ENCODE measurements at regions of chr12 and their contacts with region 1.

Region 1: GRCh38 chr12:93677195-93678064 is at the start of gene CRADD:
- DNase-seq: peak; percentile 59
- H3K4me3 ChIP-seq: peak within 1 kb of the TSS; percentile 45 to 82 (median 80)
- H3K27ac ChIP-seq: peak within 1 kb of the TSS; percentile 89 to 99 (median 98)
- H3K4me1 ChIP-seq: peaks cover 10 to 38% (median 17%) of the 10 kb centered on the region in 3 donors
- H3K27me3 ChIP-seq: peaks cover 0 to 8% (median 0%) of the 10 kb centered on the region in 4 donors
- CTCF ChIP-seq: peak in 1 of 6 experiments; percentile 2
- POLR2A ChIP-seq: peak in 2 of 4 donors; percentile 71 to 76
- total RNA-seq, gene CRADD: 20.2 to 22.9 (median 21.7) TPM

Region 2: GRCh38 chr12:93098077-93098476 is 579.4 kb before region 1 on chr12:
- intact Hi-C with region 1: no loop called
- DNase-seq: peak; percentile 13
- H3K4me3 ChIP-seq: no peak overlapping the region
- H3K27ac ChIP-seq: no peak overlapping the region
- H3K4me1 ChIP-seq: peaks cover 0 to under 1% (median 0%) of the 10 kb centered on the region in 3 donors
- H3K27me3 ChIP-seq: no peaks in the 10 kb centered on the region
- CTCF ChIP-seq: peak; percentile 33 to 52 (median 40)
- POLR2A ChIP-seq: no peak

Region 3: GRCh38 chr12:93591137-93591868 is 86.1 kb before region 1 on chr12:
- intact Hi-C with region 1: loop called (anchors 10 kb)
- DNase-seq: peak; percentile 17
- H3K4me3 ChIP-seq: peak overlapping the region; percentile 35 to 66 (median 58)
- H3K27ac ChIP-seq: peak overlapping the region; percentile 54 to 85 (median 84)
- H3K4me1 ChIP-seq: peaks cover 0 to 17% (median 3%) of the 10 kb centered on the region in 3 donors
- H3K27me3 ChIP-seq: peaks cover 0 to 47% (median 0%) of the 10 kb centered on the region in 4 donors
- CTCF ChIP-seq: no peak
- POLR2A ChIP-seq: peak in 2 of 4 donors; percentile 54 to 55

Region 4: DNA sequence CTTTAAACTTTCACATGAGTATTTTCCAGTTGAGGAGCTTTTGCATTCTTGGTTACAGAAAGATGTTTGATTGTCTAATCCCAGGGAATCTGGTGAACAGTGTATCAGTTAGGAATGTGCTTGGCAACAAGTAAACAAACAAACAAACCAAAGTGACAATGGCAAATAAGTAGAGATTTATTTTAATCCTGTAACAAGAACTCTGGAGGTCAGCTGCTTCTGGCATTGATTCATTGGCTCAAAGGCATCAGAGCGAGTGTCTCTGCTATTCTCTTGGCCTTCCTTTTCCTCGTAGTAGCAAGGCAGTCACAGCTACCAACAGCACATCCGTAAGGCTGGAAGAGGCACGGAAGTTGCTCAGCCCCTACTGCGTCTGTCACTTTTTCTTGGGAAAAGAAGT is 37.0 kb after region 1 on chr12:
- intact Hi-C with region 1: no loop called
- DNase-seq: no peak
- H3K4me3 ChIP-seq: no peak overlapping the region
- H3K27ac ChIP-seq: peak overlapping the region in 3 of 4 donors; percentile 49 to 82 (median 62)
- H3K4me1 ChIP-seq: peaks cover 0 to 33% (median 4%) of the 10 kb centered on the region in 3 donors
- H3K27me3 ChIP-seq: no peaks in the 10 kb centered on the region
- CTCF ChIP-seq: no peak
- POLR2A ChIP-seq: no peak

Region 5: DNA sequence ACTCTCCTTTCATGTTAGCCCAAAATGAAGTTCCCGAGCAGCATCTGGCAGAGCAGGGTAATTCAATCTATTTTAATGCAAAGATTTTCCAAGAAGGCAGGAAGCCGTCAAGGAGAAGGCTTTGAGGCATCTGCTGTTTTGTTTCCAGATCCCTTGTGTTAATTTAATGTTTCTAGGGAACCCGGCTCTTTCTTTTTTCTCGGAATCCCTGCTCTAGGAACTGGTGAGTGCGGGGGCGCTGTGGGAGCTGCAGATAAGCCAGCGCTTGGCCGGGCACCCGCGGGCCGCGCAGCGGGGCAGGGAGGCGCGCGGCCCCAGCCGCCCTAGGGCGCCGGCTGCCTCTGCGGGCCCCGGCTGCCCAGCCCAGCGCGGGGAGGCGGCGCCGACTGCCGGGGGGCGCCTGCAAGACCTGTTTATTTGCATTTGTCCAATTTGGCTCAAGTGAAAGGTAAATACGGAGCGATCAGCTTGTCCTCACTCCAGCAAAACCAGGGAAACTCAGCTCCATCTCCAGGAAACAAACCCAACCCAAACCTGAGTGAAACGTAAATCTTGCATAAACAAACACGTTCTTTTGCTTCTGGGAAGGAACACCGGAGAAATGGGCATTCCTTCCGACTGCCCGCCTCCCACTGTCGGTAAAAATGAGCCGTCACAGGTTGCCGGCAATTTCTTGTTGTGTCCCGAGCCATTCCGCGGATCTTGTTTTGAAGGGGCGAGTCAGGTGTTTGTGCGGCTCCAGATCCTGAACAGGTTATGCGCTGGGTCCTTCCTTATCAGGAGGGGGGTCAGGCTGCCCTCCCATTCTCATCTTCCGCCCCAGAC is 64.9 kb after region 1 on chr12:
- intact Hi-C with region 1: no loop called
- DNase-seq: no peak
- H3K4me3 ChIP-seq: peak overlapping the region; percentile 51 to 82 (median 62)
- H3K27ac ChIP-seq: peak overlapping the region; percentile 82 to 93 (median 90)
- H3K4me1 ChIP-seq: peaks cover 8 to 79% (median 24%) of the 10 kb centered on the region in 3 donors
- H3K27me3 ChIP-seq: no peaks in the 10 kb centered on the region
- CTCF ChIP-seq: peak; percentile 7 to 45 (median 31)
- POLR2A ChIP-seq: peak in 1 of 4 donors; percentile 12

Region 6: DNA sequence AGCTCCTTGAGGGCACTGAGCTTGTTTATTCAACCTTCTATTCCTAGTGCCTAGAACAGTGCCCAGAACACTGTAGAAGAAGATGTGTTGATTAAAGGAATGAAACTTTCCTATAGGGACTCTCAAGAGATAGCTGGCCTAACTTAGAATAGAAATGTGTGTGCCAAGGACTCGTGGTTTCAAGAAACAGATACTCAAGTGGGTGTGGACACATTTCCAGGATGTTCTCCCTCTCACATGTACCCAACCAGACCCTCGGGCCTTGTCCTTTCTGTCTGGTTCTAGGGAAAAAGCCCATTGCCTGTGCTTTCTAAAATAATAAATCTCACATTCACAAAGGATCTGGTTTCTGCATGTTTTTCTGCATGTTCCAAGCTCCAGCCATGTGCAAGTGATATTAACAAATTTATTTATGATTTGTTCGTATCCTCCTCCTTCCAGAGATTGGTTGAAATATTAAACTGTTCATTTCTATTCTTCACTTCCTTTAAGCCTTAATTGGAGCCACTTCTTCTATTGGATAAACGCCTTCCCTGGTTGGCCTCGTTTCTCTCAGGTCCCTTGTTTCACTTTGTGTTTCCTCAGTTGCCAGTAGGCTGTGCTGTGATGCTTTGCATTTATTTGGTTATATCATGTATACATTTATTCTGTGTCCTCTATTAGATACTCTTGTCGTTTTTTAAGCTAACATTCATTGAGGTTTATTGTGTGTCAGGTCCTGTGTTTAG is 89.5 kb after region 1 on chr12:
- intact Hi-C with region 1: no loop called
- DNase-seq: no peak
- H3K4me3 ChIP-seq: no peak overlapping the region
- H3K27ac ChIP-seq: peak overlapping the region in 3 of 4 donors; percentile 31 to 53 (median 32)
- H3K4me1 ChIP-seq: peaks cover 4 to 24% (median 11%) of the 10 kb centered on the region in 3 donors
- H3K27me3 ChIP-seq: no peaks in the 10 kb centered on the region
- CTCF ChIP-seq: peak; percentile 28 to 74 (median 59)
- POLR2A ChIP-seq: no peak

Measured in esophagus squamous epithelium (tissue), 5 donors.